GM10248 (cell line): ENCODE measurements at regions of chr7 and their contacts with region 1.

Region 1: DNA sequence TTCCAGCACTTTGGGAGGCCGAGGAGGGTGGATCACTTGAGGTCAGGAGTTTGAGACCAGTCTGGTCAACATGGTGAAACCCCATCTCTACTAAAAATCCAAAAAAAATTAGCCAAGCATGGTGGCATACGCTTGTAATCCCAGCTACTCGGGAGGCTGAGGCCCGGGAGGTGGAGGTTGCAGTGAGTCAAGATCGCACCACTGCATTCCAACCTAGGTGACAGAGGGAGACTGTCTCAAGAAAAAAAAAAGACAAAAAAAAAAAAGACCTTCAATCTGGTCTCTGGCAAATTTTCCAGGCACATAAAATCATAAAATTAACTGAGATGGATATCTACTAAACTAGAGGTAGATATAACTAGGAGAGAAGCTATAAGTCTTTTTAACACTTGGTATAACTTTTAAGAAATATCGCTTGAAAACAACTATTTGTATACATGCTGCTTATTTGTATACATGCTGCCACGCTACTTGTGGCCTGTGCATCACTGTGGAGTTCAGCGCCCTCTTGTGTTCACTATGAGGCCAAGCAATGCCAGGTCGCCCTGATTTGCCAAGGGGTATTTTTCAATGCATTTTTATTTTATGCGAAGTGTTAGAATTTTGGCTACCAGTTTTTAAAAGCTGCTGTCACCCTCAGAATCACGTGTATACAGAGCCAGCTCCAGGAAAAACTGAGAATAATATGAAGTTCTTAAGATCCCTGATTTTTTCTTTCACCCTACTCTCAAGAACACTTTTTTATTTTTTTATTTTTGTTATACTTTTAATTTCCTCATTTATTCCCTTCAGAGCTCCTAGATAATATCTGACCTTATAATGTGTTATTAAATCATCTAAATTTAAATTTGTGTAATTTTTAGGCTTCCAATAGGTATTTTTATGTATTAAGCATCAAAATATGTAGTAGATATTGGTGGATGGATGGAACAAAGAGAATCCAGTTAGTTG is 26.7 kb downstream of the CYCS start:
- DNase-seq: peak; percentile 78
- CTCF ChIP-seq: peak; percentile 93

Region 2: DNA sequence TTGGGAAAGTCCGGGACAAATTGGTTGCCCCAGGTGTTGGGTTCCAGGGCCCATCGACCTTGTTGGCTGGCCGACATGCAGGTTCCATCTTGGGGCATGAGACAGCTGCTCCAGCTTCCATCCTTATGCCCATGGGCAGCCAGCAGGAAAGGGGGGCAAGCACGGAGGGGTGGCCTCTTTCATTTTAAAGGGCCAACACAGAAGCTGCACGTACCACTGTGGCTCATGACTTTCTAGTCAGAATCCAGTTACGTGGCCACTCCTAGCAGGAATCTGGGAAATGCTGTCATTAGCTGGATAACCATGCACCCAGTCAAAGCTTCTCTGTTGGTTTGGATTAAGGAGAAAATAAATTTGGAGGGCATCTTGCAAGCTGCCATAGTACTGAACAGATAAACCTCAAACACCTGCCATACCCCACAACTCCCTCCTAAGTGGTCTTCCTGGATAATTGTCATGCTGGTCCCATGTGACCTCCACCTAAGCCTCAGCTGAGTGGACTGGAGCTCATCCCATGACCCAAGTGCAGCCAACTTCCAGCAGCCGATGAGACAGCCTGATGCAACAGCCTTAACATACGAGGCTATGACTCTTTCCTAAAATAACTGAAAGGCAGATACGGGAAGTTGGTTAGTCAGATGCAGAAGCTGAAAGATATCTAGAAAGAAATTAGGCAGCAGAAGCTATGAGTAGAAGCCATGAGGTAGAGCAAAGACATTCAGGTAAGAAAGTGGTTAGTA is 319.7 kb before region 1 on chr7:
- CTCF ChIA-PET with region 1: interaction called, 11 read pairs
- POLR2A ChIA-PET with region 1: no interaction called
- DNase-seq: peak; percentile 42
- CTCF ChIP-seq: no peak

Region 3: GRCh38 chr7:24819916-24820689 is 278.3 kb before region 1 on chr7:
- CTCF ChIA-PET with region 1: interaction called, 312 read pairs
- POLR2A ChIA-PET with region 1: no interaction called
- DNase-seq: peak; percentile 81
- CTCF ChIP-seq: peak; percentile 75

Region 4: GRCh38 chr7:25109276-25109675 is 10.9 kb after region 1 on chr7:
- CTCF ChIA-PET with region 1: interaction called, 57 read pairs
- POLR2A ChIA-PET with region 1: no interaction called
- DNase-seq: no peak
- CTCF ChIP-seq: no peak

Region 5: GRCh38 chr7:25125137-25125946 is 27.0 kb after region 1 on chr7 and contains the start of gene CYCS:
- CTCF ChIA-PET with region 1: interaction called, 24 read pairs
- POLR2A ChIA-PET with region 1: no interaction called
- DNase-seq: peak; percentile 93
- CTCF ChIP-seq: no peak

Region 6: GRCh38 chr7:25259587-25260243 is 161.3 kb after region 1 on chr7:
- CTCF ChIA-PET with region 1: no interaction called
- POLR2A ChIA-PET with region 1: no interaction called
- DNase-seq: peak; percentile 52
- CTCF ChIP-seq: peak; percentile 72